ENCODE measurements at regions of chr10 and their contacts with region 1.

Region 1: GRCh38 chr10:9081253-9081652 is 1026.8 kb downstream of the GATA3 start:
- DNase-seq: no peak
- ATAC-seq: no peak
- H3K4me3 Mint-ChIP-seq: no peak overlapping the region
- H3K27ac Mint-ChIP-seq: no peak overlapping the region
- H3K4me1 Mint-ChIP-seq: peaks cover 29% of the 10 kb centered on the region
- H3K27me3 Mint-ChIP-seq: peaks cover 16% of the 10 kb centered on the region

Region 2: GRCh38 chr10:8065651-8066050 is 1015.6 kb before region 1 on chr10:
- CTCF ChIA-PET with region 1: no interaction called
- POLR2A ChIA-PET with region 1: no interaction called
- intact Hi-C with region 1: loop called in 1 of 2 experiments (anchors 5 kb)
- DNase-seq: no peak
- ATAC-seq: peak; percentile 43
- H3K4me3 Mint-ChIP-seq: peak overlapping the region; percentile 64
- H3K27ac Mint-ChIP-seq: peak overlapping the region; percentile 90
- H3K4me1 Mint-ChIP-seq: peaks cover 95% of the 10 kb centered on the region
- H3K27me3 Mint-ChIP-seq: no peaks in the 10 kb centered on the region